Spleen (tissue), 13 donors: ENCODE measurements at regions of chr10 and their contacts with region 1.

Region 1: GRCh38 chr10:80662577-80663261 is 125.0 kb downstream of the SH2D4B start:
- DNase-seq: peak; percentile 92
- H3K4me3 ChIP-seq: peak overlapping the region in 2 of 8 donors; percentile 19 to 49
- H3K27ac ChIP-seq: peak overlapping the region in 4 of 8 donors; percentile 21 to 88 (median 49)
- H3K4me1 ChIP-seq: peaks cover 0 to 48% (median 19%) of the 10 kb centered on the region in 6 donors
- H3K27me3 ChIP-seq: peaks cover 0 to 31% (median 3%) of the 10 kb centered on the region in 7 donors
- CTCF ChIP-seq: peak; percentile 65 to 91 (median 86)
- POLR2A ChIP-seq: no peak

Region 2: DNA sequence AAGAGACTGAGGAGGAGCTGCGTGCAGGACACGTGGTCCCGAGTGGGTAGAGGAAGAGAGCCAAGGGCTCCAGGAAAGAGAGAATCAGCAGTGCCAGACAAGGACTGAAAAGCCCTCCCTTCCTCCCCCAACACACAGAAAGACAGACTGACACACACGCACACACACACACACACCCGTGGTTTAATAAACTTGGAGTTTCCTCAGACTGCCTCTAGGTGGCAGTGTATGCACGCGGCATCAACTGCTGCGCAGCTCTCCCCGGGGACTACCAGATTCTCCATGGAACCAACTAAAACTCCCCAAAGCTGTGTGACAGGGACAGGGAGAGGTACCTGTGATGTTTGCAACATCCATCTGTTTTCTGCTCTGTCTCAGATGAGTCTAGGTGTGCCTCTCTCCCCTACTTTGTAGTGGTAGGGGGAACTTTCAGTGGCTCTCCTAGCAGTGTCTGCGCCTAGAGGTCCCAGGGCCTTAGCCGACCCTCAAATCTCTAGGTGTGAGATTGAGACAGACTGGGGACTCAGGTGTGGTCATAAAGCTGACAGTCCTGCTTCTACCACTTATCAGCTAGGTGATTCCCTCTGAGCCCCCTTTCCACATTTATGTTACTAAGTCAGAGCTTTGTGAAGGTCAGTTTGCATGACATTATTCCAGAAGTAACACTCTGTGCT is 217.9 kb before region 1 on chr10:
- intact Hi-C with region 1: loop called (anchors 5 kb)
- DNase-seq: peak; percentile 89
- H3K4me3 ChIP-seq: no peak overlapping the region
- H3K27ac ChIP-seq: peak overlapping the region in 6 of 8 donors; percentile 27 to 61 (median 52)
- H3K4me1 ChIP-seq: peaks cover 7 to 47% (median 20%) of the 10 kb centered on the region in 6 donors
- H3K27me3 ChIP-seq: no peaks in the 10 kb centered on the region
- CTCF ChIP-seq: peak in 9 of 11 experiments; percentile 34 to 86 (median 78)
- POLR2A ChIP-seq: no peak

Region 3: GRCh38 chr10:80619036-80619435 is 43.7 kb before region 1 on chr10:
- intact Hi-C with region 1: no loop called
- DNase-seq: no peak
- H3K4me3 ChIP-seq: no peak overlapping the region
- H3K27ac ChIP-seq: no peak overlapping the region
- H3K4me1 ChIP-seq: no peaks in the 10 kb centered on the region
- H3K27me3 ChIP-seq: no peaks in the 10 kb centered on the region
- CTCF ChIP-seq: no peak
- POLR2A ChIP-seq: no peak

Region 4: GRCh38 chr10:80924063-80924952 is 261.6 kb after region 1 on chr10:
- intact Hi-C with region 1: loop called (anchors 10 kb)
- DNase-seq: no peak
- H3K4me3 ChIP-seq: no peak overlapping the region
- H3K27ac ChIP-seq: no peak overlapping the region
- H3K4me1 ChIP-seq: no peaks in the 10 kb centered on the region
- H3K27me3 ChIP-seq: no peaks in the 10 kb centered on the region
- CTCF ChIP-seq: peak in 7 of 11 experiments; percentile 42 to 65 (median 58)
- POLR2A ChIP-seq: no peak

Region 5: GRCh38 chr10:81065474-81065873 is 402.8 kb after region 1 on chr10:
- intact Hi-C with region 1: no loop called
- DNase-seq: no peak
- H3K4me3 ChIP-seq: no peak overlapping the region
- H3K27ac ChIP-seq: no peak overlapping the region
- H3K4me1 ChIP-seq: no peaks in the 10 kb centered on the region
- H3K27me3 ChIP-seq: no peaks in the 10 kb centered on the region
- CTCF ChIP-seq: no peak
- POLR2A ChIP-seq: no peak